Mucosa of descending colon (tissue), 3 donors: ENCODE measurements at regions of chr11 and their contacts with region 1.

Region 1: DNA sequence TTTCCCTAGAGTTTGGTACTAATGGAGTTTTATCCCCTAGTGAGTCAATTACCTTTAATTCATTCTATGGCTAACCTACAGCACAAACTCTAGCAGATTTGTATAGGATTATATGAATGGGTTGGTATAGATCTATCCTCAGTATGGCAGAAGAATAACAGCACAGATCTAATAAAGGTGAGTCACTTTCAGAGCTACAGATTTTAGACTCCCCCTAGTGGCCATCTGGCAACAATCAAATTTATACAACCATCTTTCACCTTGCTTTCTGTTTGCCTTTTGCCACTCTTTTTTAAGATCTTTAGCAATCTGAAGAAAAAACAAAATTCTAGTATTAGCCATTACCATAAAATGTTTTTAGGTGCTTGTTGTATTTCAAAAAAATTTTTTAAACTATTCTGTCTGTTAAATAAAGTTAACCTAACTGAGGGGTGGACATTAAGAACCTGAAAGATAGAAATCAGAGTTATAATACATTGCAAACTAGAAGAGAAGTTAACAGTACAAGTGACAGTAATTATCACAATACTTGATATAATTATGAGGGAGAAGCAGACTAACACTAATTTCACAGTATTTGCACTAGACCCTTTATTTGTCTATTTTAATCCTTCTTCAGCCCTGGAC is 25.8 kb downstream of the DDIAS start:
- DNase-seq: peak in 1 of 3 donors; percentile 61
- ATAC-seq: peak; percentile 91
- H3K4me3 ChIP-seq: no peak overlapping the region
- H3K4me1 ChIP-seq: peaks cover 4% of the 10 kb centered on the region
- CTCF ChIP-seq: peak; percentile 81

Region 2: GRCh38 chr11:82867495-82868082 is 59.8 kb before region 1 on chr11:
- intact Hi-C with region 1: loop called in 1 of 2 experiments (anchors 2 kb)
- DNase-seq: peak in 2 of 3 donors; percentile 25 to 98
- ATAC-seq: peak; percentile 71
- H3K4me3 ChIP-seq: no peak overlapping the region
- H3K4me1 ChIP-seq: no peaks in the 10 kb centered on the region
- CTCF ChIP-seq: peak; percentile 35